Right cardiac atrium (tissue), 5 donors: ENCODE measurements at regions of chr7 and their contacts with region 1.

Region 1: GRCh38 chr7:148242294-148242801 is 348.2 kb upstream of the C7orf33 start:
- DNase-seq: no peak
- ATAC-seq: peak; percentile 88 to 89
- H3K4me3 ChIP-seq: no peak overlapping the region
- H3K27ac ChIP-seq: no peak overlapping the region
- H3K4me1 ChIP-seq: no peaks in the 10 kb centered on the region
- H3K27me3 ChIP-seq: no peaks in the 10 kb centered on the region

Region 2: DNA sequence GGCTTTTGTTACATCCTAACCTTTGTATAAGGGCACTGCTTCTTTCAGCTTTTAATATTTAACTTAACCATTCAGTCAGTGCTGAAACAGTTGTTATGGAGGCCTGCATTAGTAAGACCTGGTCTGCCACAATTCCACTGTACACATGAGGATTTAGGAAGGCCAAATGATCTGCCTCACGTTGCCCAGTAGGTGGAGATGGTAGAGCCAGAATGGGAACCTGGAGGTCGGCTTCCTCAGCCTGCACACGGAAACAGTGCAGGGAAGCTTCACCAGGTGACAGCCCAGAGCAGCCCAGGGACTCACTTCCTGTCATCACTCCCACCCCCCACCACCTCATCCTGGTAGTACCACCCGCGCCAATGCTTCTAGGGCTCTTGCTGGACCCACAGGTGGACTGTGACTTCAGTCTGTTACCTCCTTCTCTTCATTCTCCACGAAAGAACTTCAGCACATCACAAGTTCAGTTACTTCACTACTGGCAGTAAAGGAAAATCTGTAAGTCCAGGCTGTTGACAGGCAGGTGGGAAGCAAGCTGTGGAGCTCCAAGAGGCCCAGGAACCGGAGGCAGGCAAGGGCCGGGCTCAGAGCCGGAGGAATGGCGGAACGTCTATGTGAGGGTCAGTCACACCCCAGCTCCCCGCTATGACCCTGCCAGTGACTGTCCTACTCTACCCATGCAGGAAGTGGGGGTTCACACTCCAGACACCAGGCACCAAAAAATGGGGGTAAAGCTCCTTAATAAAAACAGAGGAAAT is 132.1 kb before region 1 on chr7:
- intact Hi-C with region 1: loop called in 2 of 4 experiments (anchors 10 kb)
- DNase-seq: no peak
- ATAC-seq: peak; percentile 41 to 55
- H3K4me3 ChIP-seq: no peak overlapping the region
- H3K27ac ChIP-seq: no peak overlapping the region
- H3K4me1 ChIP-seq: no peaks in the 10 kb centered on the region
- H3K27me3 ChIP-seq: no peaks in the 10 kb centered on the region